Panc1 (cell line): ENCODE measurements at regions of chr18 and their contacts with region 1.

Region 1: DNA sequence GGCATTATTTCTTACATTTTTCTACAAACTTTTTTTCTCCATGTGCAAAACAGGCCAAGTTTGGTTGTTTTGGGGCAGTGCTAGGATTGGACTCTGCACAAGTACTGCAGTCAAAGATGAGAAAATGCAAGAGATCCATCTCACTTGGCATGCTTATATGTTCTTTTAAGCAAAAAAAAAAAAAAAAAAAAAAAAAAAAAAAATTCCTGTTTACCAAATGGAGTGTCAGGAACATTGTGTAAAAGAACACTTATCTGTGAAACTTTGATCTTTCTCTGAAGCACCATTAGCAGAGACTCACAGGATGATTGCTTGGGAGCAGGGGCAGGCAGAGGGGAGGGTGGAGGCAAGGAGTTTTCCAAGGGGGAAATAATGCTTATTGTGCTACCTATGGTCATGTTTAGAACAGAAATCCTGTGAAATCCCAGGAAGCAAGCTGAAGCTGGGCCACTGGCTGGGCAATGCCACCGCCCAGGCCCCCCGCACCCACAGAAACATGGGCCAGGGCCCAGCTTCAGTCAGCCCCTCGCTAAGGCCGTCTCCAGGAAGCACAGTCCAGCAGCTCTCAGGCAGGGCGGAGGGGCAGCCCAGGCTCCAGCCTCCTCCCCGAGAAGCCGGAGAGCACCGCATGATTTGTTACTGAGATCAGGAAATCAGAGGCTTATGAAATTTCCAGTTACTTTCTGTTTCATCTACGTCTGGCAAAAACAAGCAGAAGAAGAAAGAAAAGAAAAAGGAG is 229.4 kb downstream of the ZNF516 start:
- DNase-seq: no peak
- ATAC-seq: no peak
- H3K4me3 ChIP-seq: peak overlapping the region in 1 of 2 experiments; percentile 16; a peak in 2 of 4 replicates
- H3K27ac ChIP-seq: no peak overlapping the region
- H3K4me1 ChIP-seq: no peaks in the 10 kb centered on the region
- H3K27me3 ChIP-seq: peaks cover 18% of the 10 kb centered on the region
- CTCF ChIP-seq: no peak

Region 2: GRCh38 chr18:76179257-76179656 is 86.4 kb before region 1 on chr18:
- CTCF ChIA-PET with region 1: no interaction called
- POLR2A ChIA-PET with region 1: interaction called, 19 read pairs
- in situ Hi-C with region 1: no loop called
- intact Hi-C with region 1: no loop called
- DNase-seq: no peak
- ATAC-seq: no peak
- H3K4me3 ChIP-seq: no peak overlapping the region
- H3K27ac ChIP-seq: no peak overlapping the region
- H3K4me1 ChIP-seq: no peaks in the 10 kb centered on the region
- H3K27me3 ChIP-seq: peaks cover 8% of the 10 kb centered on the region; the same call in 1 of the 2 replicates
- CTCF ChIP-seq: no peak